Activated CD8-positive, alpha-beta T cell treated with anti-CD3 and anti-CD28 coated beads, Interleukin-2, amount 10 ng/mL, durations not matched to agents 7 days and 5 days (primary cell): ENCODE measurements at regions of chr2 and their contacts with region 1.

Region 1: DNA sequence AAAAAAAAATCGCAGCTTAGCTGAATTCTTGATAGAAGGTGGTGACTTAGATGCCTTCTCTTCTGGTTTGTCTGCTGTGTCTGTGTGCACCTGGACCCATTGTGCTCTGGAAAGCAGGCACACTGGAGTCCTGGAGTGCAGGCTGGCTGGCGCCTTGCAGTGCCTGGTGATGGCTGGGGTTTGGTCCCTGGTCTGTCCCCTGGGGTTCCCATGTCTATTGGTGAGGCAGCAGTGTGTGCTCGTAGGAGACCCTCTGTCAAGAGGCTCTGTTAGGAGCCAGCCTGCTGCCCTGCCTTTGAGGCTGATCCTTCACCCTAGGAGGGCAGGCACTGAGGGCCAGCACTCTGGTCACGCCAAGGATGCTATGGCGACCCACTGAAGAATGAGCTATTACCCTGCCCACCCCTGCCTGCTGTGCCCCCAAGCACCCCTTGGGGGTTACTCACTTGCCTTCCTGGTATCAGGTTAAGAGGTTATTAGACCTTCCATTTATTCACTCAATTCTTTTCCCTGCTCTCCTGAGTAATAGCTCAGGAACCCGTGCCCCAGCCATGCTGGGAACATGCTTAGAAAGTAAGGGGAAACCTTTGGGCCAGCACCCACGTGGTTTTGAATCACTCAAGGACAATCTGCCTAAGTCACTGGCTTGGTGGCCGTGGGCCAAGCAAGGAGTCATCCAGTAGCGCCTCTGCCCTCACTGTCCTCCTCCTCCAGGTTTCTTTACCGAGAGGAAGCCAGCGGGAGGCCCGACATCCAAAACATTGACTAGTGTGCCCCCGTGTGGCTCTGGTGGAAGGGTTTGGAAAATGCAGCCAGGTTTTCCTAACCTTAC is 284.5 kb downstream of the PRKCE start:
- DNase-seq: peak; percentile 65
- ATAC-seq: peak; percentile 79
- H3K4me3 Mint-ChIP-seq: no peak overlapping the region
- H3K27ac Mint-ChIP-seq: no peak overlapping the region
- H3K4me1 Mint-ChIP-seq: peaks cover 7% of the 10 kb centered on the region
- H3K27me3 Mint-ChIP-seq: no peaks in the 10 kb centered on the region

Region 2: GRCh38 chr2:45643543-45644542 is 292.2 kb before region 1 on chr2:
- CTCF ChIA-PET with region 1: interaction called, 16 read pairs
- POLR2A ChIA-PET with region 1: no interaction called
- DNase-seq: peak; percentile 68
- ATAC-seq: peak; percentile 99
- H3K4me3 Mint-ChIP-seq: peak overlapping the region; percentile 62
- H3K27ac Mint-ChIP-seq: no peak overlapping the region
- H3K4me1 Mint-ChIP-seq: peaks cover 17% of the 10 kb centered on the region
- H3K27me3 Mint-ChIP-seq: peaks cover 25% of the 10 kb centered on the region

Region 3: GRCh38 chr2:45650851-45651414 is 285.1 kb before region 1 on chr2:
- CTCF ChIA-PET with region 1: interaction called, 16 read pairs
- POLR2A ChIA-PET with region 1: no interaction called
- DNase-seq: peak; percentile 95
- ATAC-seq: peak; percentile 91
- H3K4me3 Mint-ChIP-seq: peak overlapping the region; percentile 92
- H3K27ac Mint-ChIP-seq: peak overlapping the region; percentile 99
- H3K4me1 Mint-ChIP-seq: peaks cover 31% of the 10 kb centered on the region
- H3K27me3 Mint-ChIP-seq: peaks cover 8% of the 10 kb centered on the region